ENCODE measurements at regions of chrX and their contacts with region 1.

Region 1: GRCh38 chrX:70878902-70879301 is 29.6 kb downstream of the TEX11 start:
- DNase-seq: no peak
- H3K27ac ChIP-seq: no peak overlapping the region
- CTCF ChIP-seq: no peak

Region 2: GRCh38 chrX:70908541-70908940 is 29.6 kb after region 1 on chrX and contains the start of gene TEX11:
- CTCF ChIA-PET with region 1: no interaction called
- POLR2A ChIA-PET with region 1: interaction called, 10 read pairs
- DNase-seq: no peak
- H3K27ac ChIP-seq: no peak within 1 kb of the TSS
- CTCF ChIP-seq: no peak